CD8-positive, alpha-beta memory T cell (primary cell): ENCODE measurements at regions of chr7 and their contacts with region 1.

Region 1: DNA sequence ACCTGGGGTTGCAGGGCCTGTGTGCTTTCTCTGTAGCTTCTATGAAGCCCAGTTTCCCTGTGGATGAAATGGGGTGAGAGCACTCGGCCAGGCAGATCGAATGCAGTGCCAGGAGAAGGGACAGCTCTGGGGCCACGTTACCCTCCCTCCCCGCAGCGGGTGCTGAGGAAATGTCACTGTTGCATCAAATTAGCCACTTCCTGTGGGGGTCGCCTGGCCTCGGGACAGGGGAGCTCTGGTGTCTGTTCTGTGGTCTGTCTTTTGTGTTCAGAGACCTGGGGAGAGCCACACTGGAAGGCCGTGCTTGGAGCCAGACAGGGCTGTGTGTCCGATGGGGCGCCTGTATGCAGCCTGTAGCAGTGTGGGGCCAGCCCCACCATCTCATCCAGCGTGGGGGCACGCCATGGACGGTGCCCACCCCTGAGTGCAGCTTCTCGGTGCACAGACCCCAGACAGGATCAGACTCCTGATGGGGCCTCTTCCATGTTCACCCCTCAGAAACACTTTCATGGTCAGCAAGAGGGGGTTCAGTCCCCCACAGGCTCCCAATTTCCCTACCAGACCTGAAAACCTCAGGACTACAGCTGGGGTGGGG is 13.6 kb downstream of the TTYH3 start:
- DNase-seq: peak; percentile 18 to 68 (median 49)
- H3K4me3 ChIP-seq: peak overlapping the region; percentile 53
- H3K4me3 Mint-ChIP-seq: peak overlapping the region in 6 of 7 donors; percentile 79 to 89 (median 84)
- H3K27ac ChIP-seq: no peak overlapping the region
- H3K27ac Mint-ChIP-seq: peak overlapping the region; percentile 74 to 91 (median 82)
- H3K4me1 ChIP-seq: peaks cover 15% of the 10 kb centered on the region
- H3K4me1 Mint-ChIP-seq: peaks cover 14 to 24% (median 14%) of the 10 kb centered on the region in 3 donors
- H3K27me3 ChIP-seq: no peaks in the 10 kb centered on the region
- H3K27me3 Mint-ChIP-seq: peaks cover 0 to 2% of the 10 kb centered on the region in 2 donors

Region 2: DNA sequence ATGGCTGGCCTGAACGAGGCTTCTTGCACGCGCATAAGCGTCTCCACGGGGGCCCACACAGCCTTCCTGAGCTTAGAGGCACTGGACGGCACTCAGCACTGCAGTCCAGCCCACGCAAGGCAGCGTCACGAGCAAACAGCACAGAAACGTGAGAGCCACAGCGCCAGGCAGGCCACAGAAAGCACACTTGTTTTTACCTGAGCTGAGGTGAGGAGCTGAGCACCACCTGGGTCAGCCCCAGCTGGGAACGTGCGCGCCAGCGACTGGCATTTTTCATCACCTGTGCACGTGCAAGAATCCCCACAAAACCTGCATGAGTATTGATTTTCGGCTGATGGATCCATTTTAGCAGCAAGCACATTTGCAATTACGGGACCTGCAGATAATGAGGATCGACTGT is 59.9 kb before region 1 on chr7:
- CTCF ChIA-PET with region 1: no interaction called
- POLR2A ChIA-PET with region 1: no interaction called
- DNase-seq: no peak
- H3K4me3 ChIP-seq: no peak overlapping the region
- H3K4me3 Mint-ChIP-seq: no peak overlapping the region
- H3K27ac ChIP-seq: no peak overlapping the region
- H3K27ac Mint-ChIP-seq: no peak overlapping the region
- H3K4me1 ChIP-seq: no peaks in the 10 kb centered on the region
- H3K4me1 Mint-ChIP-seq: no peaks in the 10 kb centered on the region
- H3K27me3 ChIP-seq: no peaks in the 10 kb centered on the region
- H3K27me3 Mint-ChIP-seq: no peaks in the 10 kb centered on the region

Region 3: DNA sequence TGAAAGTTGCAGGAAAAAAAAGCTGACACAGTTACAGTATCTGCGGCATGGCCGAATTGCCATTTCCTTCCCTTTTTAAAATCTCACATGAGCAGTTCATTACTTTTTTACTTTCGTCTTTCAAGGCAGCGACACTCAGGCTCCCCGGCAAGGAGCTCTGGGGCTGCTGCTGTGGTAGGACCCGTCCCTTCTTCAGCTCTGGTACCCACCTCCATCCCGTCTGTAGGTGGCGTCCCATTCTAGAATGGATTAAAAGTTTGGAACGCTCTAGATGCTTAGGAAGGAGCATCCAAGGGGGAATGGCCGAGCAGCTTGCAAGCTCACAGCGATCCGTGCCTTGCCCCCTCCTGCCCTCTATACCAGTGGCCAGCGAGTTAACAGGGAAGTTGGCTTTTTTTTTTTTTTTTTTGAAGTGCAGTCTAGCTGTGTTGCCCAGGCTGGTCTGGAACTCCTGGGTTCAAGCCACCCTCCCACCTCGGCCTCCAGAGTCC is 36.4 kb before region 1 on chr7:
- CTCF ChIA-PET with region 1: no interaction called
- POLR2A ChIA-PET with region 1: no interaction called
- DNase-seq: peak in 1 of 5 donors; percentile 8
- H3K4me3 ChIP-seq: no peak overlapping the region
- H3K4me3 Mint-ChIP-seq: peak overlapping the region in 6 of 7 donors; percentile 20 to 52 (median 50)
- H3K27ac ChIP-seq: no peak overlapping the region
- H3K27ac Mint-ChIP-seq: peak overlapping the region in 2 of 8 donors; percentile 66 to 70
- H3K4me1 ChIP-seq: peaks cover 4% of the 10 kb centered on the region
- H3K4me1 Mint-ChIP-seq: peaks cover 3 to 9% (median 5%) of the 10 kb centered on the region in 3 donors
- H3K27me3 ChIP-seq: no peaks in the 10 kb centered on the region
- H3K27me3 Mint-ChIP-seq: no peaks in the 10 kb centered on the region

Region 4: GRCh38 chr7:2631946-2632732 is 13.2 kb before region 1 on chr7 and contains the start of gene TTYH3:
- CTCF ChIA-PET with region 1: interaction called, 3 read pairs
- POLR2A ChIA-PET with region 1: interaction called, 10 read pairs
- DNase-seq: no peak
- H3K4me3 ChIP-seq: peak within 1 kb of the TSS; percentile 78
- H3K4me3 Mint-ChIP-seq: peak within 1 kb of the TSS; percentile 83 to 92 (median 88)
- H3K27ac ChIP-seq: peak within 1 kb of the TSS; percentile 65
- H3K27ac Mint-ChIP-seq: peak within 1 kb of the TSS in 7 of 8 donors; percentile 32 to 91 (median 81)
- H3K4me1 ChIP-seq: peaks cover 26% of the 10 kb centered on the region
- H3K4me1 Mint-ChIP-seq: peaks cover 17 to 33% (median 17%) of the 10 kb centered on the region in 3 donors
- H3K27me3 ChIP-seq: no peaks in the 10 kb centered on the region
- H3K27me3 Mint-ChIP-seq: peaks cover 0 to 4% of the 10 kb centered on the region in 2 donors
- total RNA-seq, gene TTYH3: 20.2 to 22.2 TPM

Region 5: DNA sequence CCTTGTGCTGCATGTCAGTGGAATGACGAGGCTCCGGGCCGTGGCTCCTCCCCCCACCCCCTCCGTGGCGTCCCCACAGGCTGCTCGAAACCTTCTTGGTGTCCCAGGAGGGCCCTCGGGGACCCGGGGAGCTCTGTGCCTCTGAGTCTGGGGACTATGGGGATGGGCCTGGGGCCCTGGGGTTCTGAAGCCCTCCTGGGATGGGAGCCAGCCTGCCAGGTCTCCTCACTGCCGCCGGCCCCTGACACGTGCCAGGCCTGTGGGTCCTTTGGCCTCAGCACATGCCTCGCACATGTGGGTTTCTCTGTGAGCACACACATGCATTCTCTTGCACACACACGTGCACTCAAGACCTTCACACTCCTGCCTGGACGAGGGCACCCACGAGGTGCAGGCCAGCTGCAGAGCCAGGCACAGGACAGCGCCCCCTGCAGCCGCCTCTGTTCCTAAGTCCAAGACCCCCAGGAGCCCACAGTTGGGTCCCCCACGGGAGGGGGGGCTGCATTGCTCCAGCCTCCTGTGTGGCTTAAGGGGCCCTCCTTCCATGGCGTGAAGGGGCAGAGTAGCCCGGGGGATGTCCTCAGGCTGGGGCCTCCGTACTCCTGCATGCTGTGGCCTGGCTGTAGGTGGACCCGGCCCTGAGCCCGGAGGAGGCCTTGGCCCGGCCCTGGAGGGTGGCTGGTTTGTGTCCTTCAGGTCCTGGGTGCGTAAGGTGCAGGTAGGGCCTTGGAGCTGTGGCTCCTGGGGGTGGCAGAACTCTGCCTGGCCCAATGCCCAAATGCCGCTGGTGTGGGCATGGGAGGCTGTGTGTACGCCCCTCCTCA is 15.4 kb after region 1 on chr7:
- CTCF ChIA-PET with region 1: no interaction called
- POLR2A ChIA-PET with region 1: no interaction called
- DNase-seq: no peak
- H3K4me3 ChIP-seq: no peak overlapping the region
- H3K4me3 Mint-ChIP-seq: no peak overlapping the region
- H3K27ac ChIP-seq: no peak overlapping the region
- H3K27ac Mint-ChIP-seq: peak overlapping the region in 1 of 8 donors; percentile 6
- H3K4me1 ChIP-seq: no peaks in the 10 kb centered on the region
- H3K4me1 Mint-ChIP-seq: peaks cover 0 to 1% (median 0%) of the 10 kb centered on the region in 3 donors
- H3K27me3 ChIP-seq: no peaks in the 10 kb centered on the region
- H3K27me3 Mint-ChIP-seq: no peaks in the 10 kb centered on the region

Region 6: DNA sequence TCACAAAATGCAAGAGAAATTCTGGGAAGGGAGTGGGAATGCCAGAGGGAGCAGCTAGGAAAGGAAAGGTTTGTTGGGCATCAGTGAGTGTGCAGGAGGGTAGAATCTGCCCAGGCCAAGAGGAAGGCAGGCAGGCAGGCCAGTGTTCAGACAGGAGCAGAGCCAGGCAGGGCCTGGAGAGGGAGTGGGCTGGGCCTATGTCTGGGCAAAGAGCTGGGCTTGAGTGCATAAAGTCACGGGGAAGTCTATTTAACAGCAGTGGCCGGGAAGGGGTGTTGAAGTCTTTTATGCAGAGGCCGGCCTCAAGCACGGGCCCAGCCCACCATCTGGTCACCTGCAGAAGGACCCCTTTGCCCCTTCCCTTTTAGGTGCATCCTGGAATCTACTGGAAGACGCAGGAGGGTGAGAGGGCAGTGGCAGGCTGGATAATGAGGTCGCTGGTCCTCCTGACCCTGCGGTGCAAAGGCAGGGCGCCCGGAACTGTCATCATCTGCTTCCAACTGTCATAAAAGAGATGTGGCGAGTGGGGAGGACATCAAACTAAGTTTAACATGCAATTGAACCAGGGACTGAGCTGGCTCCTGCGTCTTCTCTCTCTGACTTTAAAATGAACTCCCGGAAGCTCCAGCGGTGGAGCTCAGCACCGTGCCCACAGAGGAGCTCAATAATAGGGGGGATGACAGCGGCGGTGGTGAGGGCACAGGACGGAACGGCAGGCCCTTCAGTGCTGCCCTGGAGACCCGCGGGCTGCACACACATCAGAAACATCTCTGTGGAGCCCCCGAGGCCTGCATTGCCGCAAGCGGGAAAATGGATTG is 368.8 kb after region 1 on chr7:
- CTCF ChIA-PET with region 1: no interaction called
- POLR2A ChIA-PET with region 1: no interaction called
- DNase-seq: no peak
- H3K4me3 ChIP-seq: no peak overlapping the region
- H3K4me3 Mint-ChIP-seq: no peak overlapping the region
- H3K27ac ChIP-seq: no peak overlapping the region
- H3K27ac Mint-ChIP-seq: peak overlapping the region in 4 of 8 donors; percentile 40 to 83 (median 64)
- H3K4me1 ChIP-seq: peaks cover 34% of the 10 kb centered on the region
- H3K4me1 Mint-ChIP-seq: peaks cover 40 to 81% (median 65%) of the 10 kb centered on the region in 3 donors
- H3K27me3 ChIP-seq: no peaks in the 10 kb centered on the region
- H3K27me3 Mint-ChIP-seq: no peaks in the 10 kb centered on the region